HEK293 (cell line): ENCODE measurements at regions of chr1 and their contacts with region 1.

Region 1: DNA sequence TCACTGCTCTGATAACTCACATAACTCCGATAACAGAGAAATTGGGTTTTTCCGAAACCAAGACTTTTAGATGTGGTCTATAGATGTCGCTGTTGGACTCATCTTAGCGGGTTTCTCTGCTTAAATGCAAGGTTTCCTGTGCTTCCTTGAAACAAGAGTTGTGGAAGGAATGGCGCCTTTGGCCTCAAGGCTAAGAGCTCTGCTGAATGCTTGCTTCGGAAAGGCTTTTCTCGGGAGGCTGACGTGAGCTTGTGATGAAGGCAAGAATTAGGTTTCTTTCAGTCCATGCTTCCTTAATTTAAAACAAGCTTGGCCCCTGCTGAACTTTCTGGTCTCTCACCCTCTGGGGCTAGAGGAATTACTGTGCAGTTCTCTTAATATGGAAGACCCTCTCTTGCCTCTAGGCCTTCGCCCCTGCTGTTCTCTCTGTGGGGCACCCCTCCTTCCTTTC is 113.5 kb downstream of the MAP3K21 start:
- H3K4me3 ChIP-seq: no peak overlapping the region
- H3K27ac ChIP-seq: no peak overlapping the region
- H3K4me1 ChIP-seq: no peaks in the 10 kb centered on the region
- CTCF ChIP-seq: peak; percentile 87

Region 2: GRCh38 chr1:233304489-233305102 is 136.4 kb before region 1 on chr1:
- CTCF ChIA-PET with region 1: interaction called, 23 read pairs
- POLR2A ChIA-PET with region 1: no interaction called
- H3K4me3 ChIP-seq: no peak overlapping the region
- H3K27ac ChIP-seq: no peak overlapping the region
- H3K4me1 ChIP-seq: no peaks in the 10 kb centered on the region
- CTCF ChIP-seq: peak; percentile 92

Region 3: GRCh38 chr1:233421293-233421692 is 19.7 kb before region 1 on chr1:
- CTCF ChIA-PET with region 1: interaction called, 16 read pairs
- POLR2A ChIA-PET with region 1: no interaction called
- H3K4me3 ChIP-seq: no peak overlapping the region
- H3K27ac ChIP-seq: no peak overlapping the region
- H3K4me1 ChIP-seq: no peaks in the 10 kb centered on the region
- CTCF ChIP-seq: no peak

Region 4: GRCh38 chr1:233459470-233459945 is 18.5 kb after region 1 on chr1:
- CTCF ChIA-PET with region 1: interaction called, 15 read pairs
- POLR2A ChIA-PET with region 1: interaction called, 3 read pairs
- H3K4me3 ChIP-seq: no peak overlapping the region
- H3K27ac ChIP-seq: no peak overlapping the region
- H3K4me1 ChIP-seq: no peaks in the 10 kb centered on the region
- CTCF ChIP-seq: no peak

Region 5: GRCh38 chr1:233491953-233492620 is 51.1 kb after region 1 on chr1:
- CTCF ChIA-PET with region 1: interaction called, 12 read pairs
- POLR2A ChIA-PET with region 1: no interaction called
- H3K4me3 ChIP-seq: no peak overlapping the region
- H3K27ac ChIP-seq: no peak overlapping the region
- H3K4me1 ChIP-seq: no peaks in the 10 kb centered on the region
- CTCF ChIP-seq: no peak

Region 6: DNA sequence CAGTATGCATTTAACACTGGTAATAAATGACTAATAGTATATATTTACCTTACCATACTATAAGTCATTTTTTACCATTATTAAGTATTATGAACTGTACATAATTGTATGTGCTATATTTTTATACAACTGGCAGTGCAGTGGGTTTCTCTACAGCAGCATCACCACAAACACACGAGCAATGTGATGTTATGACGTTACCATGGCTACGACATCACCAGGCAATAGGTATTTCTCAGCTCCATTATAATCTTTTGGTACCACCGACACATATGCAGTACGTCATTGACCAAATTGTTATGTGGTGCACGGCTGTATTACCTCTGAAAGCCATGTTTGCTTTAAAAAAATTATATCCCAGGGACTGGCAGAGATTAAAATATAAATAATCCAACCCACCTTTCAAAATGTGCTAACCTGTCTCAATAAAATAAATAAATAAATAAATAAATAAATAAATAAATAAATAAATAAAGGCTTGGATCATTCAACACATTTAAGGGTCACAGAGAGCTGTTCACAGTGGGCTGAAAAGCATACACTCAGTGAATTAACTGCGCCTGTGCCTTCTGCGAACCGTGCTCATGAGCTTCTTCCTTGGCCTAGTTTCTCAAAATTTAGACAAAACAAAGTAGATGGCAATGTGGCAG is 342.1 kb after region 1 on chr1:
- CTCF ChIA-PET with region 1: interaction called, 13 read pairs
- POLR2A ChIA-PET with region 1: no interaction called
- H3K4me3 ChIP-seq: no peak overlapping the region
- H3K27ac ChIP-seq: no peak overlapping the region
- H3K4me1 ChIP-seq: no peaks in the 10 kb centered on the region
- CTCF ChIP-seq: no peak

Region 7: DNA sequence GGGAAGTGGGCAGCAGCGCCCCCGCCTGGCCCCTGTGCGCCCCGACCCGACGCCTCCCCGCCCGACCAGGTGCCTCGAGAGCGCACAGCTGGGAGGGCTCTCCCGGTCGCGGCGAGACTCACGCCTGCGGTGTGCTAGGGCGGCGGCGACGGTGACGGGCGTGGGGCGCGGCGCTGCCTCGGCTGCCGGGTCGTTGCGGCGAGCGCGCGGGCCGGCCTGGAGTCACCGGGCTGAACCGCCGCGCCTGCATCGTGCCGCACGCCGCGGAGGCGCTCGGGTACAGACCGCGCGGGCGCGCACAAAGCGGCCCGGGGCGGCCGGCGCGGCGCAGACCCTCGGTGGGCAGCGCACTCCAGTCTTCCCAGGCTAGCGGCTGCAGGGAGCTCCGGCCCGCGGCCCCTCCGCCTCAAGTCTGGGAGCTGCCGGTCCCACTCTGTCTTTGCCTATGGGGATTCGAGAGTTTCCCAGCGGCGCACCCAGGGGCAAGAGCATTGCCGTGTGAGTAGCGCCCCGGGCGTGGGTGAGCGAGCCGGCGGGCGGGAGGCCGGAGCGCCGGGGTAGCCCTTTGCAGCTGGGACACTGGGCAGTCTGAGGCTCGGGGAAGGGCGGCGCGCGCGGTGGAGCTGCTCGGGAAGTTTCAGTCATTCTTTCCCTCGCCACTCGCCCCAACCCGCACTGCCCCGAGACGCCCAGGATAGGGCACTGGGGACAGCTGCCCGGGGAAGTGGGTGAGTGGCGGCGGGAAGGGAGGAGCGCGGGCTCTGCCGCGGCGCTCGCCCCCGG is 463.8 kb after region 1 on chr1 and contains the start of gene SLC35F3:
- CTCF ChIA-PET with region 1: interaction called, 14 read pairs
- POLR2A ChIA-PET with region 1: no interaction called
- H3K4me3 ChIP-seq: peak within 1 kb of the TSS; percentile 59
- H3K27ac ChIP-seq: no peak within 1 kb of the TSS; the same call in 1 of the 2 replicates
- H3K4me1 ChIP-seq: no peaks in the 10 kb centered on the region
- CTCF ChIP-seq: no peak